CD14-positive monocyte (primary cell): ENCODE measurements at regions of chr17 and their contacts with region 1.

Region 1: GRCh38 chr17:17752089-17752820 is 71.0 kb downstream of the RAI1 start:
- DNase-seq: peak; percentile 94 to 97 (median 94)
- H3K4me3 ChIP-seq: peak overlapping the region; percentile 70 to 79 (median 71)
- H3K4me3 Mint-ChIP-seq: peak overlapping the region; percentile 81 to 89
- H3K27ac ChIP-seq: peak overlapping the region; percentile 72 to 86
- H3K27ac Mint-ChIP-seq: peak overlapping the region; percentile 95 to 98 (median 97)
- H3K4me1 ChIP-seq: peaks cover 42 to 49% of the 10 kb centered on the region in 2 donors
- H3K4me1 Mint-ChIP-seq: peaks cover 45% of the 10 kb centered on the region
- H3K27me3 ChIP-seq: no peaks in the 10 kb centered on the region
- H3K27me3 Mint-ChIP-seq: peaks cover 3 to 7% (median 4%) of the 10 kb centered on the region in 3 donors
- CTCF ChIP-seq: peak; percentile 40

Region 2: GRCh38 chr17:17641621-17642409 is 110.4 kb before region 1 on chr17:
- intact Hi-C with region 1: no loop called
- DNase-seq: peak; percentile 75 to 83 (median 77)
- H3K4me3 ChIP-seq: no peak overlapping the region
- H3K4me3 Mint-ChIP-seq: no peak overlapping the region
- H3K27ac ChIP-seq: no peak overlapping the region
- H3K27ac Mint-ChIP-seq: peak overlapping the region in 4 of 7 donors; percentile 24 to 81 (median 48)
- H3K4me1 ChIP-seq: peaks cover 41 to 48% of the 10 kb centered on the region in 2 donors
- H3K4me1 Mint-ChIP-seq: peaks cover 43% of the 10 kb centered on the region
- H3K27me3 ChIP-seq: no peaks in the 10 kb centered on the region
- H3K27me3 Mint-ChIP-seq: peaks cover 0 to 3% (median 2%) of the 10 kb centered on the region in 3 donors
- CTCF ChIP-seq: peak; percentile 82

Region 3: DNA sequence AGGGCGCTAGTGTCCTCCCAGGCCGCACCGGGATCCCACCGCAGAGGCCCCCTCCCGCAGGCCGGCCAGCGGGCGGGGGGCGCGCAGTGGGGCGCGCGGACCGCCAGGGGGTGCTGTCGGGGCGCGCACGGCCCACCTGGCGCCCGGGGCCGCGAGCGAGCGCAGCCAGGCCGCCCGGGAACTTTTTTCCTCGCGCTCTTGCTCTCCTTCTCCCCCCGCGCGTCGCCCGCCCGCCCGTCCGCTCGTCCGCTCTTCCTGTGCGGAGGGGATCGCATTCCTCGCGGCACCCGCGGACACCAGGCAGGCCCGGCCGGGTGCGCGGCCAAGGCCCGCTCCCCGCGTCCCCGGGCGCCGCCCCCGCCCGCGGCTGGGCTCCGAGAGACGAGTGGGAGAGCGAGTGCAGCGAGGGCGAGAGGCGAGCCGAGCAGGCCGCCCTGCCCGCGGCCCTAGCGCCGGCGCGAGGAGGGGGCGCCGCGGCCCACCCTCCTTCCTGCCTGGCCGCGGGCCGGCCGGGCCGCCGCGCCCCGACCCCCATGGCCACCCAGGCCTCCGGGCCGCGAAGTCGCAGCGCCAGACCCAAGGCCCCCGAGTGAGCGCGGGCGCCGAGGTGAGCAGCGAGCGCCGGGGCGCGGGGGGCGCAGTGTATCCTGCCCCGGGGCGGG is 70.9 kb before region 1 on chr17 and contains the start of gene RAI1:
- intact Hi-C with region 1: loop called in 1 of 2 experiments (anchors 5 kb)
- DNase-seq: peak; percentile 64 to 72 (median 69)
- H3K4me3 ChIP-seq: peak within 1 kb of the TSS; percentile 50 to 87 (median 66)
- H3K4me3 Mint-ChIP-seq: peak within 1 kb of the TSS; percentile 90 to 92
- H3K27ac ChIP-seq: peak within 1 kb of the TSS; percentile 75 to 89
- H3K27ac Mint-ChIP-seq: peak within 1 kb of the TSS; percentile 73 to 95 (median 89)
- H3K4me1 ChIP-seq: peaks cover 15 to 35% of the 10 kb centered on the region in 2 donors
- H3K4me1 Mint-ChIP-seq: peaks cover 33% of the 10 kb centered on the region
- H3K27me3 ChIP-seq: no peaks in the 10 kb centered on the region
- H3K27me3 Mint-ChIP-seq: peaks cover 3 to 10% (median 4%) of the 10 kb centered on the region in 3 donors
- CTCF ChIP-seq: peak; percentile 78
- polyA plus RNA-seq, gene RAI1: 0.89 to 4.4 (median 1.5) TPM

Region 4: DNA sequence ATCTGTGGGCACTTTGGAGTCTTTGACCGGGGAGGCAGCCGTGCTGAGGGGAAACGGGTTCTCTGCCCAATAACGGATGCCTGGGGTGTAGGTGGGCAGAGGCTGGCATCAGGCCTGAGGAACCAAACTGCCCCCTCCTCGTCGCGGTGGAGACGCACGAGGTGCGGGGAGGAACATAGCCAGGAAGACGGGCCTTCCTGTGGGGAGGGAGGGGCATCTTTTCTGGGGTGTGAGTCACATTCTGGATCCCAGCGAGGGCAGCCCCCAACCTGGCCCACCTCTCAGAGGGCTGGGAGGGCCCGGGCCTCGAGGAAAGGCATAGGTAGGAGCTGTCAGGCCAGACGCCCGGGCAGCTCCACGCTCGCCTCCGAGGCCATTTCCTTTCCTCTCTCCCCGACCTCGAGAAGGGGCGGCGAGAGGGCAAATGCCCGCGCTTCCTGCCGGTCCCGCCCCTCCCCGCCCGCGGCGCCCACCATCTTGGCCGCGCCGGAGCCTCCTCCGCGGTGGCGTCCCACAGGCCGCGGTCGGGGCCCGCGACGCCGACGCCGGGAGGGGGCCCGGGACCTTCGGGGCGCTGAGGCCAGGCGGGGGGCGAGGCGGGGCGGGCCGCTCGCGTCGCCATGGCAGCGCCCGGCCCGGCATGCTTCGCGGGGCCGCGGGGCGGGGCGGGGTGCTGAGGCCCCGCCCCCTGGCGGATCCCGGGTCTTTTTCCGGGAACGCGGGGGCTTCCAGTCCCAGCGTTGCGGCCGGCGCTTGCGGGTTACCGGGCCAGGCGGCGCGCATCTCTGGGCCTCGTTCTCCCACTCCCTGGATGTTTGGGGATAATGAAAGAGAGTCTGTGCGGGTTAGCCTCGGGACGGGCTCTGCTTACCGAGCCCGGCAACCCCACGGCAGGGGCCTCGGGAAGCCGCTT is 57.8 kb before region 1 on chr17:
- intact Hi-C with region 1: loop called in 1 of 2 experiments (anchors 5 kb)
- DNase-seq: peak; percentile 71 to 79 (median 79)
- H3K4me3 ChIP-seq: peak overlapping the region; percentile 63 to 97 (median 87)
- H3K4me3 Mint-ChIP-seq: peak overlapping the region; percentile 86 to 91
- H3K27ac ChIP-seq: peak overlapping the region; percentile 84 to 91
- H3K27ac Mint-ChIP-seq: peak overlapping the region; percentile 94 to 99 (median 97)
- H3K4me1 ChIP-seq: peaks cover 38 to 50% of the 10 kb centered on the region in 2 donors
- H3K4me1 Mint-ChIP-seq: peaks cover 60% of the 10 kb centered on the region
- H3K27me3 ChIP-seq: peaks cover 0 to 4% of the 10 kb centered on the region in 2 donors
- H3K27me3 Mint-ChIP-seq: peaks cover 8% of the 10 kb centered on the region in 3 donors
- CTCF ChIP-seq: no peak